K562 (cell line): ENCODE measurements at regions of chr1 and their contacts with region 1.

Region 1: GRCh38 chr1:44775078-44775929 is at the start of gene RPS8:
- DNase-seq: peak; percentile 85 to 99 (median 89)
- ATAC-seq: peak; percentile 81
- H3K4me3 ChIP-seq: peak within 1 kb of the TSS; percentile 75
- H3K27ac ChIP-seq: peak within 1 kb of the TSS; percentile 98
- H3K4me1 ChIP-seq: peaks cover 13 to 22% of the 10 kb centered on the region in 2 experiments
- H3K27me3 ChIP-seq: no peaks in the 10 kb centered on the region
- CTCF ChIP-seq: 0 out of 6 replicates have a peak, but pooled peaks of 1 of the 3 experiments have one; percentile 2
- EP300 ChIP-seq: peak; percentile 44; the same call in 1 of the 2 replicates
- POLR2A ChIP-seq: peak; percentile 100
- RAD21 ChIP-seq: no peak
- polyA plus RNA-seq, gene RPS8: 2,431 to 2,562 TPM

Region 2: DNA sequence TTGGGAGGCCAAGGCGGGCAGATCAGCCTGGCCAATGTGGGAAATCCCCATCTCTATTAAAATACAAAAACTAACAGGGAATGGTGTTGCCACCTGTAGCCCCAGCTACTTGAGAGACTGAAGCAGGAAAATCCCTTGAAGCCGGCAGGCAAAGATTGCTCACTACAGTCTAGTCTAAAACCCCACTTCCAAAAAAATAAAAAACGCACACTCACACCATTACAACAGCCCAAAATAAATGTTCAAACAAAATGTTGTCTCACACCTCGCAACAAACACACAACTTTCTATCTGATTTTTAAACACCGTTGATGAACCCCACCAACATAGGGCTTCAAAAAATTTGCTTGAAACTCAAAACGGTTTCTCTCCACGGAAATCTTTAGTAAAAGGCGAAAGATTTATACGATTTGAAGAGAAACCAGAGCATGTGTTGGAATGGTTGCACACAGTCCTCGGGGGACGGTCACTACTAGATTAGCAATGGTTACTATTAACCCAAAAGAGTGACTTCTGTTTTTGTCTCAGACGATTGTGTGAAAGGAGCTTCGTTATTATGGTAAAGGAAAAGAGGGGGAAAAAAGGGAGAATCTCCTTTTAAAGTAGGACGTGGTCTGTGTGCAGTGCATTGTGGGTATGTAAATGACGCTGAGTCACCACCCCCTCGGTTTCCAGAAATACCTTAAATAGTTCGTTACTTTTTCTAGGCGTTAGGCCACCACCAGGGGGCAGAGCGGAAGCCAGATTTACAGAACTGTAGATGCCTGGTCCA is 44.4 kb before region 1 on chr1 and contains the start of gene RNU5D-1:
- CTCF ChIA-PET with region 1: no interaction called
- POLR2A ChIA-PET with region 1: interaction called, 25 read pairs
- in situ Hi-C with region 1: no loop called
- intact Hi-C with region 1: loop called (anchors 2 kb)
- DNase-seq: peak; percentile 87 to 99 (median 90)
- ATAC-seq: peak; percentile 87
- H3K4me3 ChIP-seq: 0 out of 2 replicates have a peak within 1 kb of the TSS, but pooled peaks have one; percentile 3
- H3K27ac ChIP-seq: peak within 1 kb of the TSS; percentile 100
- H3K4me1 ChIP-seq: peaks cover 11 to 16% of the 10 kb centered on the region in 2 experiments
- H3K27me3 ChIP-seq: no peaks in the 10 kb centered on the region
- CTCF ChIP-seq: peak; percentile 79 to 97 (median 93)
- EP300 ChIP-seq: peak; percentile 80
- POLR2A ChIP-seq: peak; percentile 100
- RAD21 ChIP-seq: peak; percentile 4 to 54
- polyA plus RNA-seq, gene RNU5D-1: not detected

Region 3: DNA sequence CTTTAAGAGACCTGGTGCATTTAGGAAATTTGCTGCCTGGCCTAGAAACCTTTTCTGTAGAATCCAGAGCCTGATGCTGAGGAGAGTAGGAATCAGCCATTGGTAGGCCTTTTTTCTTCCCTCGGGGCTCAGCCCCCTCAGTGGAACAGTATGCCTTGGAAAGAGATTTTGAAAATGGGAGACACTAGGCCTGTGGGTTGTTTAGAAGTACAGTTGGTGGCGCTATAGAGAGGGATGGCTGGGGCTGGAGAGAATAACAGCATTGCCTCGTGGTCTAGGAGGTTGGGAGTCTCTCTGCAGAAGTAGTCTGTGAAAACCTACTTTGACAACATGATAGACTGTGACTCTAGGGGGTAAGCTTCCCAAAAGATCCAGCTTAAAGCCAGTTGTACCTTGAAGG is 27.4 kb before region 1 on chr1:
- CTCF ChIA-PET with region 1: no interaction called
- POLR2A ChIA-PET with region 1: interaction called, 26 read pairs
- in situ Hi-C with region 1: no loop called
- intact Hi-C with region 1: no loop called
- DNase-seq: no peak
- ATAC-seq: peak; percentile 64
- H3K4me3 ChIP-seq: no peak overlapping the region
- H3K27ac ChIP-seq: no peak overlapping the region
- H3K4me1 ChIP-seq: peaks cover 3 to 8% of the 10 kb centered on the region in 2 experiments; a peak in 4 of 5 replicates
- H3K27me3 ChIP-seq: no peaks in the 10 kb centered on the region
- CTCF ChIP-seq: peak; percentile 34 to 48 (median 43); a peak in 4 of 6 replicates
- EP300 ChIP-seq: no peak
- POLR2A ChIP-seq: no peak
- RAD21 ChIP-seq: no peak

Region 4: DNA sequence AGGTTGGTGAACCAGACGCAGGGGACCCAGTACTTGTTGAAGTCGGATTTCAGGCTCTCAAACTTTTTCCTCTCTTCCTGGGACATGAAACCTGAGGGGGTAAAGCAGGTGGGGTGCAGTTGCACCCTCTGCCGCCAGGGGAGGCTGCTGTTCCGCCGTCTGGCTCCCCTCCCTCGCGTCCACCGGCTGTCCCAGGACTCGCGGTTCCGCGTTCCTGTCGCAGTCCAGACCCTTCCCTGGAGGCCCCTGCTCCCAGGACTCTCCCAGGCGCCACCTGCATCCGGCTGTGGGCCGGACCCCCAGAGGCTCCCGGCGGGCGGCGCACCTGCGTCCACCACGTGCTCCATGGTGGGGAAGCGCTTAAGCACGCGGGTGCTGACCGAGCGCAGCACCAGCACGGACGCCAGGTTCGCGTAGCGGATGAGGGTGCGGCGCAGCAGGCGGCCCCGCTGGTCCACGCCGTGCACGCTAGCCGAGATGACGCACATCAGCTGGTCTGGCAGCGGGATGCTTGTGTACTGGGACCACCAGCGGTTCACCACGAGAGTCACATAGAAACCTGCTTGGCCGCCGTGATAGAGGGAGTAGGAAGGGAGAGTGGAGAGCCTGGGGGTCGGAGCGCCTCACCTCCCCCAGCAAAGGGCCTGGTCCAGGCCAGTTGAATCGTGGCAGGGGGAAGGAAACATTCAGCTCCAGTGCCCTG is 11.0 kb after region 1 on chr1:
- CTCF ChIA-PET with region 1: no interaction called
- POLR2A ChIA-PET with region 1: interaction called, 253 read pairs
- in situ Hi-C with region 1: no loop called
- intact Hi-C with region 1: no loop called
- DNase-seq: peak; percentile 78 to 84 (median 82)
- ATAC-seq: peak; percentile 84
- H3K4me3 ChIP-seq: no peak overlapping the region
- H3K27ac ChIP-seq: no peak overlapping the region
- H3K4me1 ChIP-seq: peaks cover 8 to 18% of the 10 kb centered on the region in 2 experiments; a peak in 4 of 5 replicates
- H3K27me3 ChIP-seq: no peaks in the 10 kb centered on the region
- CTCF ChIP-seq: peak; percentile 95 to 99 (median 96)
- EP300 ChIP-seq: no peak
- POLR2A ChIP-seq: no peak
- RAD21 ChIP-seq: peak; percentile 24 to 91

Region 5: GRCh38 chr1:44807262-44808062 is 32.2 kb after region 1 on chr1 and contains the start of gene DYNLT4:
- CTCF ChIA-PET with region 1: no interaction called
- POLR2A ChIA-PET with region 1: interaction called, 30 read pairs
- in situ Hi-C with region 1: no loop called
- intact Hi-C with region 1: no loop called
- DNase-seq: peak; percentile 86 to 99 (median 90)
- ATAC-seq: peak; percentile 84
- H3K4me3 ChIP-seq: peak within 1 kb of the TSS; percentile 30; the same call in 1 of the 2 replicates
- H3K27ac ChIP-seq: peak within 1 kb of the TSS; percentile 100
- H3K4me1 ChIP-seq: peaks cover 59 to 72% of the 10 kb centered on the region in 2 experiments
- H3K27me3 ChIP-seq: no peaks in the 10 kb centered on the region
- CTCF ChIP-seq: peak in 1 of 3 experiments; percentile 0; a peak in 1 of 6 replicates
- EP300 ChIP-seq: peak; percentile 71; the same call in 1 of the 2 replicates
- POLR2A ChIP-seq: peak; percentile 88
- RAD21 ChIP-seq: peak; percentile 9 to 20; a peak in 3 of 4 replicates
- polyA plus RNA-seq, gene DYNLT4: not detected